Right cardiac atrium (tissue), 5 donors: ENCODE measurements at regions of chr21 and their contacts with region 1.

Region 1: DNA sequence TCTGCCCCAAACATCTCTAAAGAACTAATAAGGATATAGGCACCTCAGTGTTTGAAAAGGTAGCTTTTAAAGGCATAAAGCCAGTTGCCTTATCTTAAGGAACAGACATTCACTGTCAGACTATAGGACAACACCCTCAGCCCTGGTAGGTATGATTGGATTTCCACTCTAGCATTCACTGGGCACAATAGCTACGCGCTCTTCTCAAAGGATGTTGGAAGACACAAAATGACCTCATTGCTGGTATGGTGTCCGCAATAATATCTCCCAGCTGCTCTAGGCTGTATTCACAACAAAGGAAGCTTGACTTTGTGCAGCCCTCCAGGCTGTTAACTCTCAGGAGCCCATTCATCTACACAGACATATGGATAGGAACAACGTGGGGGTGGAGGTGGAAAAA is 119.4 kb upstream of the CXADR start:
- DNase-seq: no peak
- ATAC-seq: no peak
- H3K4me3 ChIP-seq: no peak overlapping the region
- H3K27ac ChIP-seq: no peak overlapping the region
- H3K4me1 ChIP-seq: no peaks in the 10 kb centered on the region
- H3K27me3 ChIP-seq: no peaks in the 10 kb centered on the region

Region 2: DNA sequence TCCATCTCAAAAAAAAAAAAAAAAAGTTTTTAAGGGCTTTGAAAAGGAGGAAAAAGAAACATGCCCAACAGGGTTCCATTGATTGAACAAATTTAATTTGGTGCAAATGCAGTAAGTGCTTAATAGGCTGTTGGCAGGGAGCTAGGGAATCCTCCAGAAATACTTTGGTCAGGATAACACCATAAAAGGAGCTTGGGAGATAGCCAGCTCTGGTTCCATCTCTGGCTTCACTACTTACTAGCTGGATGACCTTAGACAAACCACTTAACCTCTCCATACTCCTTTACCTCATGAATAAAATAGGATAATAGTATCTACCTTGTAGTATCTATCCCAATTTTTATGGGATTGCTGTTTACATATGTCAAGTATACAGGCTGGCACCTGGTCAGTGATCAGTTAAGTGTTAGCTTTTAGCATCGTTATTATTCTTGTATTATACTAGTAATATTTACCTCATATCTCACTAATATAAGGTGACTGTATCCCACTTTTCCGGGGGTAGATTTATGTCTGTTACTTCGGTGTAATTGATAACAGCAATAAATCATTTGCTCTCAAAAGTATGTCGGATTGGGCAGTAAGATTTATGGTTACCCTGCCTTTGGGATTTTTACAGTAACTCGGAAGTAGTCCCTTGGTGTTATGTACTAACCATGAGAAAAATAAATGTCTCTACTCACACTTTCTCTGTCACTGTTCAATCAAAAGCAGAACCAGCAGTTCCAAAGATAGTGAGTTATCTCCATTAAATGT is 182.8 kb after region 1 on chr21:
- intact Hi-C with region 1: loop called (anchors 5 to 10 kb)
- DNase-seq: no peak
- ATAC-seq: no peak
- H3K4me3 ChIP-seq: no peak overlapping the region
- H3K27ac ChIP-seq: no peak overlapping the region
- H3K4me1 ChIP-seq: no peaks in the 10 kb centered on the region
- H3K27me3 ChIP-seq: no peaks in the 10 kb centered on the region